Activated CD4-positive, alpha-beta T cell treated with anti-CD3 and anti-CD28 coated beads for 36 hours (primary cell): ENCODE measurements at regions of chr15 and their contacts with region 1.

Region 1: DNA sequence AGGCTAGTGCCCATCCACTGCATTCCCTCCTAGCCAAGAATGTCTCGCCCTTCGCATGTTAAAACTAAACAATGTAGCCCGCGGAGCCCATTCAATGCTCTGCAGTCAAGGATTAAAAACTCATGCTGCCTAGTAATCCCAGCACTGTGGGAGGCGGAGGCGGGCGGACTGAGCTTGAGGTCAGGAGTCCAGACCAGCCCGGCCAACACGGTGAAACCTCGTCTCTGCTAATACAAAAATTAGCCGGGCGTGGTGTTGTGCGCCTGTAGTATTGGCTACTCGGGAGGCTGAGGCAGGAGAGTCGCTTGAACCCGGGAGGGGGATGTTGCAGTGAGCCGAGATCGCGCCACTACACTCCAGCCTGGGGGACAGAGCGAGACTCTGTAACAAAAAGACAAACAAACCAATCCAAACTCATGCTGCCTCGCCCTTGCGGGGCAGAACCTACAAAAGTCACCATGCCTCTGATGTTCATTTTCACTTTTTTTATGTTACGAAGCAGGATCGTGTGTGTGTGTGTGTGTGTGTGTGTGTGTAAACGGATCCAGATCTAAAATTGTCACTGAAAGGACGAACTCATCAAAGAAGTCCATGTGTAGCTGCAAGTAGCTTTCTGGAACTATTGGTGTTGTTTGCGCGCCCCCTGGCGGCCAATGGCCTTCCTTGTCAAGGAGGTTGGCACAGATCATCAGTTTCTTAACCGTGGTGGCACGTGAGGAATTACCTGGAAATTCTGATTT is 54.8 kb upstream of the SPESP1 start:
- DNase-seq: peak; percentile 96
- ATAC-seq: peak; percentile 94
- H3K4me3 Mint-ChIP-seq: peak overlapping the region; percentile 48
- H3K27ac Mint-ChIP-seq: no peak overlapping the region
- H3K4me1 Mint-ChIP-seq: peaks cover 3% of the 10 kb centered on the region
- H3K27me3 Mint-ChIP-seq: peaks cover 20% of the 10 kb centered on the region

Region 2: GRCh38 chr15:68559345-68560310 is 315.9 kb before region 1 on chr15:
- CTCF ChIA-PET with region 1: interaction called, 19 read pairs
- POLR2A ChIA-PET with region 1: no interaction called
- intact Hi-C with region 1: loop called (anchors 1 kb)
- DNase-seq: peak; percentile 86
- ATAC-seq: peak; percentile 90
- H3K4me3 Mint-ChIP-seq: peak overlapping the region; percentile 69
- H3K27ac Mint-ChIP-seq: no peak overlapping the region
- H3K4me1 Mint-ChIP-seq: peaks cover 14% of the 10 kb centered on the region
- H3K27me3 Mint-ChIP-seq: peaks cover 47% of the 10 kb centered on the region

Region 3: DNA sequence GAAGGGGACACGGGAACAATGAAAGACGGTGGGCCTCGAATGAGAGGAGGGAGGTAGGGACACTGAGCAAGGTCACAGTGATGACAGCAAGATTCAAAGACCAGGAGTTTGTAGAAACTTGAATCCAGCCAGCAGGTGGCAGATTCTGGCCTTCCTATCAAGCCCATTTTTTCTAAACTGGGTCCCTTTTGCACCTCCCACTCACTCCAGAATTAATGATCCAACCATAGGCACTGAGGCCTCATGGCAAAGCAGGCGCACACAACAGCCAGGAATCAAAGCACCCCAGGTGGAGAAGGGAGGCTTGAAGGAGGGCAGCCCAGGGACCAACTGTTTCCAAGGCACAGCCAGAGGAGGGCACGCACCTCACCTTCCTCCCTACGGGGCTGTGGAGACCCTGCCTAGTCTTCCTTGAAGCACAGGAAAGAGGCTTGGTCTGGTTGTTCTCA is 145.1 kb before region 1 on chr15:
- CTCF ChIA-PET with region 1: interaction called, 14 read pairs
- POLR2A ChIA-PET with region 1: no interaction called
- intact Hi-C with region 1: loop called (anchors 1 kb)
- DNase-seq: peak; percentile 43
- ATAC-seq: no peak
- H3K4me3 Mint-ChIP-seq: no peak overlapping the region
- H3K27ac Mint-ChIP-seq: no peak overlapping the region
- H3K4me1 Mint-ChIP-seq: no peaks in the 10 kb centered on the region
- H3K27me3 Mint-ChIP-seq: peaks cover 4% of the 10 kb centered on the region

Region 4: DNA sequence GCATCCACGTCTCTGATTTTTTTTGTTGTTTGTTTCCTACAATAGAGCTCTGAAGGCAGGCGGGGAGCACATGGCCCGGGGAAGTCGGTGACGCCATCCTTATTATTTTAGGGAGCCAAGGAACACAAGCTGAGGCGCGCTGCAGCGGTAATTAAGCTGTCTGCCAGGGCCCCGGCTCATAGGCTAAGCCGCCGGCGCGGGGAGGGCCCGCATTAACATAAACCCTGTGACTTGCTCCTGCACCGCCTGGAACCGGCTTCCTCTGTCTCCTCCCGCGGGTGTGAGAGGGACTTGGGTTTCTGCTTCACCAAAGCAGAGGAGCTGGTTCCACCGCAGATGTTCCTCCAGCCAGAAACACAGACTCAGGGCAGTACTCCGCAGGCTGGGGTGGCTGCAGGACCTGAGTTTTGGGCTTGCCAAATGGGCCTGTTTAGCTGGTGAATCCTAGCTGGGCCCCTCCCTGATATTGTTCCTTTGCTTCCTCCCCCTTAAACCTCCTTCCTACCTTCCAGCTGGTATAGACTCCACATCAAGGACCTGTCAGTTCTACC is 80.2 kb before region 1 on chr15:
- CTCF ChIA-PET with region 1: interaction called, 13 read pairs
- POLR2A ChIA-PET with region 1: no interaction called
- intact Hi-C with region 1: no loop called
- DNase-seq: peak; percentile 87
- ATAC-seq: peak; percentile 79
- H3K4me3 Mint-ChIP-seq: no peak overlapping the region
- H3K27ac Mint-ChIP-seq: peak overlapping the region; percentile 40
- H3K4me1 Mint-ChIP-seq: peaks cover 99% of the 10 kb centered on the region
- H3K27me3 Mint-ChIP-seq: no peaks in the 10 kb centered on the region

Region 5: DNA sequence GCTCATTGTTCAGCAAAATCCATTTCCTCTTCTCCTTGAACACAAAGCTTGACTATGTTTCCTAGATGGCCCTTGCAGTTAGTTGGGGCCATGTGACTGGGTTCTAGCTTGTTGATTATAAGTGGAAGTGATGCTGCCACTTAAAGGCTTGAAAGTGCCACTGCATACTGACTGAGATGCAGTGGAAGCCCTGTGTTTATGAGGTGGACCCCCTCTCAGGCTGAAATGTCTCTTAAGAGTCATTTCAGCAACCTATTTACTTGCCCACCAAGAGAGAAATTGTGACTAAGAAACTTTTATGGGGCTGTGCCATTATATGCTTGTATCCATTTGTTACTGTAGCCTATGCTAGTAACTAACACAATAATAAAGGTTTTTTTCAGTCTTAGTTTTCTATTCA is 46.5 kb before region 1 on chr15:
- CTCF ChIA-PET with region 1: interaction called, 18 read pairs
- POLR2A ChIA-PET with region 1: interaction called, 5 read pairs
- intact Hi-C with region 1: no loop called
- DNase-seq: peak; percentile 38
- ATAC-seq: peak; percentile 93
- H3K4me3 Mint-ChIP-seq: no peak overlapping the region
- H3K27ac Mint-ChIP-seq: no peak overlapping the region
- H3K4me1 Mint-ChIP-seq: peaks cover 18% of the 10 kb centered on the region
- H3K27me3 Mint-ChIP-seq: peaks cover 4% of the 10 kb centered on the region

Region 6: GRCh38 chr15:68862415-68862814 is 13.1 kb before region 1 on chr15:
- CTCF ChIA-PET with region 1: interaction called, 12 read pairs
- POLR2A ChIA-PET with region 1: no interaction called
- intact Hi-C with region 1: no loop called
- DNase-seq: no peak
- ATAC-seq: no peak
- H3K4me3 Mint-ChIP-seq: no peak overlapping the region
- H3K27ac Mint-ChIP-seq: no peak overlapping the region
- H3K4me1 Mint-ChIP-seq: no peaks in the 10 kb centered on the region
- H3K27me3 Mint-ChIP-seq: peaks cover 5% of the 10 kb centered on the region

Region 7: DNA sequence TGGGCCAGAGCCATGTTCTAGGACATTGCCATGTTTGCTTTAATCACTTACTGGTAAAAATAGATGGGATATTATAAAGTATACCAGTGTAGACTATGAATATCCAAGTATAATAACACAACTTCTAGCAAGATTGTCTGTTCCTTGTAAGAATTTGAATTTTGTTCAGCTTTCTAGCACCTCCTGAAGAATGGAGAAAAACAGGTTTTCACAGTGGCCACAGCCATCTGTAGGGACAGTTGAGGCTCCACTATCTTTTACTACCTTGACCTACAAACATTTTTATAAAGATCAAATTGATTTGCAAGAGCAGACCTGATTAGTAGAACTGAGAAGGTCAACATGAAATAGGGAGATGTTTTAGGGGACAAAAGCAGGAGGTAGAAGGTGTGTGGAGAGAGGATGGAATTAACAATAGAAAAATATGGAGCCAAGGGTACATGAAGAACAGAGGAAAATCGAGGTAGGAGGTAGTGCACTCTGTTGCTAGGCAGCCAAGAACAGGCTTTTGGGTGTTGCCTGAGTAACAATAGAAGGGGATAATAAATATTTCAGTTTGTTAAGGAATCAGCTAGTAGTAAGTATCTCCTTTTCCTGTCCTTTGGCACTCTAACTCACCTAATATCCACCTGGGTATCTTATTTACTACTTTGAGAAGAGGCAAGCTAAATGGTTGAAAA is 63.8 kb after region 1 on chr15:
- CTCF ChIA-PET with region 1: no interaction called
- POLR2A ChIA-PET with region 1: no interaction called
- intact Hi-C with region 1: no loop called
- DNase-seq: no peak
- ATAC-seq: no peak
- H3K4me3 Mint-ChIP-seq: no peak overlapping the region
- H3K27ac Mint-ChIP-seq: no peak overlapping the region
- H3K4me1 Mint-ChIP-seq: no peaks in the 10 kb centered on the region
- H3K27me3 Mint-ChIP-seq: peaks cover 12% of the 10 kb centered on the region

Region 8: GRCh38 chr15:69164807-69165636 is 289.5 kb after region 1 on chr15:
- CTCF ChIA-PET with region 1: no interaction called
- POLR2A ChIA-PET with region 1: no interaction called
- intact Hi-C with region 1: no loop called
- DNase-seq: no peak
- ATAC-seq: no peak
- H3K4me3 Mint-ChIP-seq: no peak overlapping the region
- H3K27ac Mint-ChIP-seq: no peak overlapping the region
- H3K4me1 Mint-ChIP-seq: peaks cover 11% of the 10 kb centered on the region
- H3K27me3 Mint-ChIP-seq: no peaks in the 10 kb centered on the region